ENCODE measurements at regions of chr13 and their contacts with region 1.

Region 1: DNA sequence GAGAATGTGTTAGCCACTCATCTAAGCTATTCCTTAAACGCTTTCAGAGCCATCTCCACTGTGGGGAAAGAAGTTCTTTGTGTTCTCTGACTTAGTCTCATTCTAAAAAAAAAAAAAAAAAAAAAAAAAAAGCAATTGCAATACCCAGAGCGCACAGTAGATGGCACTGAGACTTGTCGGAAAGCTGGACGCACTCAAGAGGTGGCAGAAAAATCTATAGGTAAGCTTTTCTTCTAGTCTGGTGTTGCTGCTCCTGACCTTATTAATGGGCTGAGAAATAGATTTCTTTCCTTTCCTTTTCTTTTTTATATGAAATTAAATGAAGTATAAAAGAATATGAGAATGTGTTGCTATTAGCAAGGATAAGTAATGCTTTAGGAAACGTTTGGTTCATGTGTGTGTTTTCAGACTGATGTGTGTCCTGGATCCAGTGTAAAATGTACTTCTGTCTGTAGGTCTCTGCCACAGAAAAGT is 4.7 kb upstream of the GJB2 start:
- DNase-seq: peak in 5 of 35 experiments; percentile 10 to 70 (median 30)
- ATAC-seq: peak in 3 of 4 experiments; percentile 40 to 63 (median 43)
- H3K4me3 ChIP-seq: no peak overlapping the region
- H3K4me3 Mint-ChIP-seq: no peak overlapping the region
- H3K27ac ChIP-seq: no peak overlapping the region
- H3K27ac Mint-ChIP-seq: no peak overlapping the region
- H3K4me1 ChIP-seq: peaks cover 2 to 18% of the 10 kb centered on the region in 2 experiments
- H3K4me1 Mint-ChIP-seq: peaks cover 16 to 22% (median 17%) of the 10 kb centered on the region in 3 donors
- H3K27me3 ChIP-seq: peaks cover 12 to 35% of the 10 kb centered on the region in 2 experiments
- H3K27me3 Mint-ChIP-seq: peaks cover 32 to 49% of the 10 kb centered on the region in 2 donors

Region 2: DNA sequence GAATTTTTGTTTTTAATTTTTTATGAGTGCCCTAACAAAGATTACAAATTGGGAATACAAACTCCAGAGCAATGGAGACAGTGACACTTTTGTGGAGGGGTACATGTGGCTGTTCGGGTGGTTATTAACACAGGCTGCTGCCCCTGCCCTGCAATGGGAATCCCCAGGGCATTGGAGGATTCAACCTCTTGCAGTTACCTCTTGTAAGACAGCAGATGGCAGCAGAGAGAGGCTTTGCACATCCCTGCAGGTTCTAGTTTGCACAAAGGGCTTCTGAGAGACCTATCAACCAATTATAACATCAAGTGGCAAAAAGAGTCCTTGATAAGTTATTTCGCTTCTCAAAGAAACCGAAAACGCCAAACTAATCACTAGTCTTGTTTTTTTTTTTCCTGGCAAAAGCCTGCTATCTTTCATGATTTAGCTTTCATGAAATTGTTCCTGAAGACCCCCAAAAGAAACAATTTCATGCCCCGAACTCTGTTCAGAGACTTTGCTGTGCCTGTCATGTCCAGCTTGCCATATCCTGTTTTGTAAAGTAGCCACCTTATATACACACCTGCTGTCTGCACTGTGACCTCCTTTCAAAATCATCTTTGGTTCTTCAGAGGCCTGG is 15.1 kb before region 1 on chr13:
- CTCF ChIA-PET with region 1: interaction called, 5 to 11 read pairs
- POLR2A ChIA-PET with region 1: no interaction called
- DNase-seq: peak in 29 of 35 experiments; percentile 17 to 86 (median 40)
- ATAC-seq: peak; percentile 92 to 99 (median 96)
- H3K4me3 ChIP-seq: no peak overlapping the region
- H3K4me3 Mint-ChIP-seq: no peak overlapping the region
- H3K27ac ChIP-seq: no peak overlapping the region
- H3K27ac Mint-ChIP-seq: no peak overlapping the region
- H3K4me1 ChIP-seq: no peaks in the 10 kb centered on the region
- H3K4me1 Mint-ChIP-seq: peaks cover 0 to 2% (median 0%) of the 10 kb centered on the region in 3 donors
- H3K27me3 ChIP-seq: peaks cover 4 to 22% of the 10 kb centered on the region in 2 experiments
- H3K27me3 Mint-ChIP-seq: peaks cover 35 to 39% of the 10 kb centered on the region in 2 donors

Region 3: DNA sequence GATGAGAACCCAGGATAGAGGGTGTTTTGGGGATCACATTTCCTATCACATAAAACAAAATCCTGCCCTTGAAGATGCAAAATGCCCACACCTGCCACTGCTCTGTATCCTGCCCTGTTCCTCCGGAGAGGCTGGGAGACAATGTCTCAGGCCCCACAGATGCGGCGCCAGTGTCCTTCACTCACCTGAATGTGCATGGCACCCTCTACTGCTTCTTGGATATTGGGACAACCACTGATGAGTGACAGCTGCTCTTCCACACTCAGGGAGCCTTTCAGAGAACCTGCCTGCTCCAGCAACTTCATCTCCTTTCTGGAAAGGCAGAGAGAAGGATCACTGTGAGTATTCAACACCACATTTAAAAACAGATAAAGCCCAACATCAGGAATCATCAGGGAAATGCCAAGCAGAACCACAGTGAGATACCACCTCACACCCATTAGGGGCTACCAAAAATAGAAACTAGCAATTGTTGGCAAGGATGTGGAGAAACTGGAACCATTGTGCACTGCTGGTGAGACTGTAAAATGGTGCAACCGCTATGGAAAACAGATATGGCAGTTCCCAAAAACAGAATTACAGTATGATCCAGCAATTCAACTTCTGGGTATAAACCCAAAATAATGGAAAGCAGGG is 291.9 kb after region 1 on chr13:
- CTCF ChIA-PET with region 1: interaction called, 6 to 18 read pairs
- POLR2A ChIA-PET with region 1: no interaction called
- DNase-seq: peak in 16 of 35 experiments; percentile 10 to 73 (median 42)
- ATAC-seq: peak in 3 of 4 experiments; percentile 65 to 83 (median 73)
- H3K4me3 ChIP-seq: no peak overlapping the region
- H3K4me3 Mint-ChIP-seq: no peak overlapping the region
- H3K27ac ChIP-seq: no peak overlapping the region
- H3K27ac Mint-ChIP-seq: no peak overlapping the region
- H3K4me1 ChIP-seq: peaks cover 3 to 4% of the 10 kb centered on the region in 2 experiments
- H3K4me1 Mint-ChIP-seq: peaks cover 2 to 12% (median 2%) of the 10 kb centered on the region in 3 donors
- H3K27me3 ChIP-seq: no peaks in the 10 kb centered on the region
- H3K27me3 Mint-ChIP-seq: no peaks in the 10 kb centered on the region